HEK293 (cell line): ENCODE measurements at regions of chr9 and their contacts with region 1.

Region 1: DNA sequence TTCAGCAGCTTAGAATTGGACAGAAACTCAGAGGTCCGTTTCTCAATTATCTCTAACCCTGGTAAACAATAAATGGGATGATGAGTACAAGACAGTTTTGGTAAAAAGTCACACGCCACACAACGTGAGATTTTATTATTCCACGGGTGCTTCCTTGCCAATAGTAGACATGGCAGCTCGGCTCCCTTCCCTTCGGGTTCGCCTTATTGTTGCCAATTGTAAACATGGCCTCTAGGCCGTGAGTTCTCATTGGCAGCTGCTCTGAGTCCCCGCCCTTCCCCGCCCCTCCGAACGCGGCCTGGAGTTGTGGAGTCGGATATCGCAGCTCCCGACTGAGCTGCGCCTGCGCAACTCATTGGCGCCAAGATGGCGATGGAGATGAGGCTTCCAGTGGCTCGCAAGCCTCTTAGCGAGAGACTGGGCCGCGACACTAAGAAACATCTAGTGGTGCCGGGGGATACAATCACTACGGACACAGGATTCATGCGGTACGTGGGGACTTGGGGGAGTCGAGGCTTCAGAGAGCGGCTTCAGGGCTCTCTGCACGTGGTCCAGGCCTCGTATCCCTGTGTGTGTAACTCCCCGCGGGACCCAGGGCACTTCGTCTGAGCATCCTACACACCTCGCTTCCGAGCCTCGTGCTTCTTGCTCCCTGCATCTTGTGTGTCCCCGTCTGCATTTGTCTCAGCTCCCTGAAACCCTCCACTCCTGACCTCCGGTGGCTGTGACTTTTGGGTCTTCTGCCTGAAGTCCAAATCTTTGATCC is at the start of gene EXOSC2:
- H3K4me3 ChIP-seq: peak within 1 kb of the TSS; percentile 72
- H3K27ac ChIP-seq: peak within 1 kb of the TSS; percentile 63
- H3K4me1 ChIP-seq: no peaks in the 10 kb centered on the region
- CTCF ChIP-seq: no peak

Region 2: GRCh38 chr9:130461218-130461630 is 232.4 kb before region 1 on chr9:
- CTCF ChIA-PET with region 1: interaction called, 305 read pairs
- POLR2A ChIA-PET with region 1: no interaction called
- H3K4me3 ChIP-seq: no peak overlapping the region
- H3K27ac ChIP-seq: no peak overlapping the region
- H3K4me1 ChIP-seq: no peaks in the 10 kb centered on the region
- CTCF ChIP-seq: peak; percentile 92

Region 3: GRCh38 chr9:130682490-130683121 is 11.0 kb before region 1 on chr9:
- CTCF ChIA-PET with region 1: interaction called, 46 read pairs
- POLR2A ChIA-PET with region 1: interaction called, 10 read pairs
- H3K4me3 ChIP-seq: peak overlapping the region; percentile 8
- H3K27ac ChIP-seq: no peak overlapping the region
- H3K4me1 ChIP-seq: no peaks in the 10 kb centered on the region; the same call in 1 of the 2 replicates
- CTCF ChIP-seq: peak; percentile 57; the same call in 1 of the 2 replicates

Region 4: GRCh38 chr9:130707225-130707976 is 13.8 kb after region 1 on chr9:
- CTCF ChIA-PET with region 1: interaction called, 50 read pairs
- POLR2A ChIA-PET with region 1: interaction called, 30 read pairs
- H3K4me3 ChIP-seq: no peak overlapping the region
- H3K27ac ChIP-seq: no peak overlapping the region
- H3K4me1 ChIP-seq: no peaks in the 10 kb centered on the region
- CTCF ChIP-seq: peak; percentile 79

Region 5: GRCh38 chr9:130712564-130713285 is 19.1 kb after region 1 on chr9:
- CTCF ChIA-PET with region 1: interaction called, 50 read pairs
- POLR2A ChIA-PET with region 1: interaction called, 30 read pairs
- H3K4me3 ChIP-seq: peak overlapping the region; percentile 96
- H3K27ac ChIP-seq: peak overlapping the region; percentile 88
- H3K4me1 ChIP-seq: no peaks in the 10 kb centered on the region
- CTCF ChIP-seq: no peak

Region 6: GRCh38 chr9:130852801-130853200 is 159.2 kb after region 1 on chr9:
- CTCF ChIA-PET with region 1: no interaction called
- POLR2A ChIA-PET with region 1: no interaction called
- H3K4me3 ChIP-seq: no peak overlapping the region
- H3K27ac ChIP-seq: no peak overlapping the region
- H3K4me1 ChIP-seq: no peaks in the 10 kb centered on the region
- CTCF ChIP-seq: no peak